CD14-positive monocyte (primary cell): ENCODE measurements at regions of chr1 and their contacts with region 1.

Region 1: DNA sequence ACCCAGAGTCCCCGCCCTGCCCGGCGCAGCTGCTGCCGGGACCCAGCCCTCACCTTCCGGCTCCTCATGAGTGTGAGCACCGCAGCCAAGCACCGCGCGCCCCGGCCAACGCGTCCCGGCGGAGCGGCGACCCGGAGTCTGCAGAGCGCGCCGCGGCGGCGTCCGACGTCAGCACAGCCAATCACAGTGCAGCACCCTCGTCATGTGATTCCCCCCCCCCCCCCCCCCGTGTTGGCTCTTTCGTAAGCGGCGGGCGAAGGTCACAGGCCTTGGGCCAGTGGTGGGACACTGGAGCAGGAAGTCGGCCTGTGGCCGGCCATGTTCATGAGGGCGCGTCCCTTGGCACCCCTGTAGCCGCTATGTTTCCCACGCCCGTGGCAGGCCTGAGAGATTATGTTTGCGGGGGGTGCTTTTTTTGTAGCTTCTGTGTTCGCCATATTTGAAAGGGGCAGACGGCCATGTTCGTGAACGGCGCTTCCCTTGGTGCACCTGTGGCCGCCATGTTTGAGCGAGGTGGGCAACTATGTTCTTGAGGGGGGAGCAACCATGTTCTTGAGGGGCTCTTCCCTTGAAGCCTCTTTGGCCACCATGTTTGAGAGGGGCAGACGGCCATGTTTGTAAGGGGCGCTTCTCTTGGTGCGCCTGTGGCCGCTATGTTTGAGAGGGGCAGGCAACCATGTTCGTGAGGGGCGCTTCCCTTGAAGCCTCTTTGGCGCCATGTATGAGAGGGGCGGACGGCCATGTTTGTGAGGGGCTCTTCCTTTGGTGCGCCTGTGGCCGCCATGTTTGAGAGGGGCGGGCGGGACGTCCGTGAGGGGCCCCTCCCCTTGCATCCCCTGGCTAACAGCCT is at the start of gene C1orf174:
- DNase-seq: peak; percentile 95 to 97 (median 96)
- H3K4me3 ChIP-seq: peak within 1 kb of the TSS; percentile 59 to 97 (median 89)
- H3K4me3 Mint-ChIP-seq: peak within 1 kb of the TSS; percentile 86 to 94
- H3K27ac ChIP-seq: peak within 1 kb of the TSS; percentile 94 to 98
- H3K27ac Mint-ChIP-seq: peak within 1 kb of the TSS; percentile 98 to 100 (median 100)
- H3K4me1 ChIP-seq: peaks cover 10 to 23% of the 10 kb centered on the region in 2 donors
- H3K4me1 Mint-ChIP-seq: peaks cover 28% of the 10 kb centered on the region
- H3K27me3 ChIP-seq: no peaks in the 10 kb centered on the region
- H3K27me3 Mint-ChIP-seq: peaks cover 0 to 4% (median 1%) of the 10 kb centered on the region in 3 donors
- CTCF ChIP-seq: no peak
- polyA plus RNA-seq, gene C1orf174: 19.1 to 46.0 (median 21.3) TPM

Region 2: DNA sequence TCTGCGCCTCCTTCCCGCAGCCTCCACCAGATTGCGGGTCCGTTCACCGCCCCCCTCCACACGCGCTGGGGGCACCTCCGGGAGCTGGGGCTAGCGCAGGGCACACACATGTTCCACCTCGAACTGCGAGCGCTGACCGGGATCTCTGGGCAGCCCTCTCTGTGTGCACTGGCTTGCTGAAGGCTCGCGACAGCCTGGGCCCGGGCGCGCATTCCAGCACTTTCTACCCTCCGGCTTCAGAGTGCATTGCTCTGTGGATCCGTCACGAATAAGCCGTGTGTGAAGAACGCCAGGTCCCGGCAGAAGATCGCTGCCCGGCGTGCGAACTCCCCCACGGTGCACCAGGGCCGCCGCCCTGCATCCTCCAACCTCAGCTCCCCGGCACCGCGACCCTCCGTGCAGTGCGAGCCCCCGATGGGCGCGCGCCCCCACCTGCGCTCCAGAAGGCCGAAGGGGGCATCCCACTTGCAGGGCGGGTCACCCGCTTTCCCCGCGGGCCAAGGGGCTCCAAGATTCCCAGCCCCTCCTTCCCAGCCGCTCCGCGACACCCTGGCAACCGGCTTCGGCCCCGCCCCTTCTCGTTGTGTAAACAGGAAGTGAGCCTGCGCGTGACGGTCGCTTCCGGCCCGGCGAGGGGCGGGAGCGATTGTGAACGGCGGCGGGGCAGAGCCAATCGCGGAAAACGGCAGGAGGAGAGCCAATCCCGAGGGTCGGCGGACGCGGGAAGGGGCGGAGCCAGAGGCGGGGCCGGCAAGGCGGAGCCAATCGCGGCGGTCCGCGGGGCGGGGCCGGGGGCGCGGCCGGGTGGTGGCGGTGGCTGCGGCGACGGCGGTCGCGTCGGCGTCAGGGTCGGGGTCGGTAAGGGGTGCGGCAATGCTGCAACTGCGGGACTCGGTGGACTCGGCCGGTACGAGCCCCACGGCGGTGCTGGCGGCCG is 275.9 kb before region 1 on chr1 and contains the start of gene TPRG1L:
- intact Hi-C with region 1: loop called (anchors 1 to 10 kb)
- DNase-seq: peak; percentile 96 to 97 (median 96)
- H3K4me3 ChIP-seq: peak within 1 kb of the TSS; percentile 67 to 99 (median 69)
- H3K4me3 Mint-ChIP-seq: peak within 1 kb of the TSS; percentile 92 to 94
- H3K27ac ChIP-seq: peak within 1 kb of the TSS in 1 of 2 donors; percentile 74
- H3K27ac Mint-ChIP-seq: peak within 1 kb of the TSS; percentile 31 to 90 (median 82)
- H3K4me1 ChIP-seq: peaks cover 27 to 35% of the 10 kb centered on the region in 2 donors
- H3K4me1 Mint-ChIP-seq: peaks cover 40% of the 10 kb centered on the region
- H3K27me3 ChIP-seq: no peaks in the 10 kb centered on the region
- H3K27me3 Mint-ChIP-seq: peaks cover 0 to 16% (median 1%) of the 10 kb centered on the region in 3 donors
- CTCF ChIP-seq: no peak
- polyA plus RNA-seq, gene TPRG1L: 16.1 to 19.7 (median 18.5) TPM

Region 3: DNA sequence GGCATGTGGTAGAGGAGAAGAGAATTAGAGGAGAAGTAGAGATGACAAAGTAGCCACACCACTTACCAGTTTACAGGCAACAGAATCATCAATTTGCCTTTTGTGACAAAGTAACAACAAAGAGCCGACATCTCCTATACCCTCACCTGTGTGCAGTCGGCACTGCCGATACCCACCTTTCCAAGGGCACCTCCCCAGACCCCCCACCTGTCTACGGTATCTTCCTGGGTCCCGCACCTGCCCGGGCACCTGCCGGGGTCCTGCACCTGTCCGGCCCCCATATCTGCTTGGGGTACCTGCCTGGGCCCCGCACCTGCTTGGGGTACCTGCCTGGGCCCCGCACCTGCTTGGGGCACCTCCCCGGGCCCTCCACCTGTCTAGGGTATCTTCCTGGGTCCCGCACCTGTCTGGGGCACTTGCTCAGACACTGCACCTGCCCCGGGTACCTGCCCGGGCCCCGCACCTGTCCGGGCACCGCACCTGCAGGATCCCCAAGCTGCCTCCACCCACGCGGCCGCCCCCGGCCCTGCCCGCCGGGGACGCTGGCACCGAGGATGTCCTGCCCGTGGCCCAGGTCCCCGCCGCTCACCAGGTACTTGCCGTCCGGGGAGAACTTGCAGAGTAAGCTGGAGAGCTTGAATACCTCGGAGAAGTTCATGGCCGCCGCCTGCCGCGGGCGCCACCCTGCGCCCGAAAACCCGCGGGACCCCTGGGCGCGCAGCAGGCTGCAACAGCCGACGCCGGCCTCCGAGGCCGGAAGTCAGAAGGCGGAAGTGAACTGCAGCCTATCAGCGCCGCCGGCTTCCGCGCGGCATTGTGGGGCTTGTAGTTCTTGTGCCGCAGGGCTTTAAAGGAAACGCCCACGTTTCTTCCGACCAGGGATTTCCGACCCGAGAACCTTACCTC is 250.7 kb before region 1 on chr1 and contains the start of gene WRAP73:
- intact Hi-C with region 1: loop called in 1 of 2 experiments (anchors 10 kb)
- DNase-seq: peak; percentile 86 to 93 (median 87)
- H3K4me3 ChIP-seq: peak within 1 kb of the TSS; percentile 71 to 91 (median 75)
- H3K4me3 Mint-ChIP-seq: peak within 1 kb of the TSS; percentile 82 to 90
- H3K27ac ChIP-seq: peak within 1 kb of the TSS in 1 of 2 donors; percentile 66
- H3K27ac Mint-ChIP-seq: peak within 1 kb of the TSS in 2 of 7 donors; percentile 87 to 89
- H3K4me1 ChIP-seq: peaks cover 36 to 48% of the 10 kb centered on the region in 2 donors
- H3K4me1 Mint-ChIP-seq: peaks cover 26% of the 10 kb centered on the region
- H3K27me3 ChIP-seq: peaks cover 34 to 41% of the 10 kb centered on the region in 2 donors
- H3K27me3 Mint-ChIP-seq: peaks cover 35 to 44% (median 39%) of the 10 kb centered on the region in 3 donors
- CTCF ChIP-seq: peak; percentile 16
- polyA plus RNA-seq, gene WRAP73: 26.1 to 64.9 (median 33.2) TPM

Region 4: GRCh38 chr1:3772027-3772714 is 128.2 kb before region 1 on chr1:
- intact Hi-C with region 1: loop called (anchors 5 to 10 kb)
- DNase-seq: peak; percentile 67 to 80 (median 74)
- H3K4me3 ChIP-seq: peak overlapping the region; percentile 29 to 78 (median 48)
- H3K4me3 Mint-ChIP-seq: peak overlapping the region; percentile 68 to 75
- H3K27ac ChIP-seq: no peak overlapping the region
- H3K27ac Mint-ChIP-seq: no peak overlapping the region
- H3K4me1 ChIP-seq: peaks cover 19 to 32% of the 10 kb centered on the region in 2 donors
- H3K4me1 Mint-ChIP-seq: peaks cover 20% of the 10 kb centered on the region
- H3K27me3 ChIP-seq: peaks cover 0 to 27% of the 10 kb centered on the region in 2 donors
- H3K27me3 Mint-ChIP-seq: peaks cover 17 to 40% (median 19%) of the 10 kb centered on the region in 3 donors
- CTCF ChIP-seq: no peak

Region 5: GRCh38 chr1:3856908-3857790 is 43.2 kb before region 1 on chr1 and contains the starts of genes CEP104 and DFFB:
- intact Hi-C with region 1: loop called (anchors 2 to 5 kb)
- DNase-seq: peak; percentile 76 to 80 (median 78)
- H3K4me3 ChIP-seq: peak within 1 kb of the TSS; percentile 58 to 100 (median 92)
- H3K4me3 Mint-ChIP-seq: peak within 1 kb of the TSS; percentile 98
- H3K27ac ChIP-seq: peak within 1 kb of the TSS; percentile 55 to 84
- H3K27ac Mint-ChIP-seq: peak within 1 kb of the TSS; percentile 74 to 96 (median 87)
- H3K4me1 ChIP-seq: peaks cover 18 to 26% of the 10 kb centered on the region in 2 donors
- H3K4me1 Mint-ChIP-seq: peaks cover 38% of the 10 kb centered on the region
- H3K27me3 ChIP-seq: no peaks in the 10 kb centered on the region
- H3K27me3 Mint-ChIP-seq: peaks cover 1 to 8% (median 6%) of the 10 kb centered on the region in 3 donors
- CTCF ChIP-seq: no peak
- polyA plus RNA-seq, gene CEP104: 8.3 to 25.1 (median 13.0) TPM
- polyA plus RNA-seq, gene DFFB: 5.9 to 14.7 (median 6.6) TPM

Region 6: GRCh38 chr1:3868464-3869006 is 31.8 kb before region 1 on chr1:
- intact Hi-C with region 1: no loop called
- DNase-seq: no peak
- H3K4me3 ChIP-seq: no peak overlapping the region
- H3K4me3 Mint-ChIP-seq: no peak overlapping the region
- H3K27ac ChIP-seq: no peak overlapping the region
- H3K27ac Mint-ChIP-seq: peak overlapping the region in 4 of 7 donors; percentile 1 to 53 (median 26)
- H3K4me1 ChIP-seq: no peaks in the 10 kb centered on the region
- H3K4me1 Mint-ChIP-seq: no peaks in the 10 kb centered on the region
- H3K27me3 ChIP-seq: no peaks in the 10 kb centered on the region
- H3K27me3 Mint-ChIP-seq: peaks cover 0 to 3% (median 0%) of the 10 kb centered on the region in 3 donors
- CTCF ChIP-seq: no peak

Region 7: GRCh38 chr1:3978990-3979325 is 78.6 kb after region 1 on chr1:
- intact Hi-C with region 1: no loop called
- DNase-seq: no peak
- H3K4me3 ChIP-seq: no peak overlapping the region
- H3K4me3 Mint-ChIP-seq: no peak overlapping the region
- H3K27ac ChIP-seq: no peak overlapping the region
- H3K27ac Mint-ChIP-seq: no peak overlapping the region
- H3K4me1 ChIP-seq: no peaks in the 10 kb centered on the region
- H3K4me1 Mint-ChIP-seq: no peaks in the 10 kb centered on the region
- H3K27me3 ChIP-seq: no peaks in the 10 kb centered on the region
- H3K27me3 Mint-ChIP-seq: peaks cover 5 to 7% (median 6%) of the 10 kb centered on the region in 3 donors
- CTCF ChIP-seq: no peak